Cardiac septum (tissue), 1 donor: ENCODE measurements at regions of chr5 and their contacts with region 1.

Region 1: DNA sequence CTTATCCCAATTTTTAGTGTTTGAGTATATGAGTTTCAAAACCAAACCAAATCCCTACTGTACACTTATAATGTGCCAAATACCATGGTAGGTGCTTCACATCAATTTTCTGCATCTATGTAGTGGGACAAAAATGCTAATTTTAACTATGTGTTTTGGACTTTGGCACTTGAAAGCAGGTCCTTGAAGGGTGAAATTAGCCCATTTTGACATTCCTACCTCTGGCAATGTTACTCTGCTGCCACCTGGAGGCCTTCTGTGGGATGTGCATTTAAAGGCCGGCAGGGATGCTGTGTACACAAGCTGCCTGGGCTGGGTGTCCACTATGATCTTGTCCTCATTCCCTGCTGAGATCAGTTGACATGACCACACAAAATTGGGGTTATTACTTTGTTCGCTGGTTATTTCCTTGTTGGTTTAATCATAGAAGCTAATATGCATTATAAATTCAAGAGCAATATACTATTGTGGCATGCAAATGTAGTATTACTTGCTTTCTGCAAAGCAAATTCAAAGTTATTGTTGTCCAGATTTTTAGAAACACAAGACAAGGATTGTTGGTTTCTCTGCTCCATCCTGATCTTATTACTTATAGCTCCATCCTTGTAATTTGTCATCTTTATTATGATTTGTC is 166.8 kb downstream of the ARHGEF28 start:
- DNase-seq: no peak

Region 2: GRCh38 chr5:73591102-73591695 is 201.6 kb before region 1 on chr5:
- intact Hi-C with region 1: loop called (anchors 1 kb)
- DNase-seq: no peak

Region 3: GRCh38 chr5:73693481-73694061 is 99.2 kb before region 1 on chr5:
- intact Hi-C with region 1: loop called (anchors 5 kb)
- DNase-seq: no peak

Region 4: GRCh38 chr5:74507370-74508005 is 714.7 kb after region 1 on chr5:
- intact Hi-C with region 1: no loop called
- DNase-seq: no peak